Activated naive CD4-positive, alpha-beta T cell treated with anti-CD3 and anti-CD28 coated beads for 36 hours (primary cell): ENCODE measurements at regions of chr9 and their contacts with region 1.

Region 1: DNA sequence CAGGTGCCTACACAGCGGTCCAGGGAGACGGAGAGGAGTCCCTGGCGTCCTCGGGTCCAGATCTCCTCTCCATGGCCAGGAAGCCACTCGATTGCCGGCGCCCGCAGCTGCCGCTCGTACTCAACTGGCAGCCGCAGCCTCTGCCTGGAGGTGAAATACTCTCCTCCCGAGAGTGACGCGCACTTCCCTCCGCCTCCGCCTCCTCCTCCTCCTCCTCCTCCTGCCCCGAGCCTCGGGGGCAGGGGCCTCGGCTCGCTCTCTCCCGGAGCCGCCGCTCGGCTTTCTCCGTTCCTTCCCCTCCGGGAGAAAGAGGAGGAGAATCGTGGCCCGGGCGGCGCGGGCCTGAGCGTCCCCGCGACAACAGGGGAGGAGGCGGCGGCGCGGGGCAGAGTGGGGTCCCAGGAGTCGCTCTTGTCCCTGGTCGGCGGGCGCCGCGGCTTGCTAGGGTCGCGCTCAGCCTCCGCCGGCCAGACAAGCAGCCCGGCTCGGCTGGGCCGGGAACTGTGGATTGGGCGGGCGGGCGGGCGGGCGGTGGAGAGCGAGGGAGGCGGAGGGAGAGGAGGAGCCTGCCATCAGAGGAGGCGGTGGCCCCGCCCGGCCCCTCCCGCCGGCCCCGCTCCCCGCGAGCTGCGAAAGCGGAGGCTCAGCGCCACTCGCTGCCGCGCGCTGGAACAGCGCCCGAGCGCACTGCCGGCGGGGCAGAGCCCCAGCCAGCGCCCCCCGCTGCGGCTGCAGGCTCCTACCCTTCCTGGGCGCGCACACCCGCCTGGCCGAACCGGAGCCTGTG is at the start of gene CEMIP2:
- DNase-seq: peak; percentile 88
- H3K4me3 Mint-ChIP-seq: peak within 1 kb of the TSS; percentile 86
- H3K27ac Mint-ChIP-seq: peak within 1 kb of the TSS; percentile 91
- H3K4me1 Mint-ChIP-seq: peaks cover 37% of the 10 kb centered on the region
- H3K27me3 Mint-ChIP-seq: no peaks in the 10 kb centered on the region
- total RNA-seq, gene CEMIP2: 36.4 to 39.7 TPM

Region 2: GRCh38 chr9:70563431-70564204 is 1205.0 kb before region 1 on chr9:
- CTCF ChIA-PET with region 1: no interaction called
- intact Hi-C with region 1: loop called (anchors 5 kb)
- DNase-seq: peak; percentile 82
- H3K4me3 Mint-ChIP-seq: peak overlapping the region; percentile 38
- H3K27ac Mint-ChIP-seq: peak overlapping the region; percentile 97
- H3K4me1 Mint-ChIP-seq: peaks cover 52% of the 10 kb centered on the region
- H3K27me3 Mint-ChIP-seq: no peaks in the 10 kb centered on the region

Region 3: DNA sequence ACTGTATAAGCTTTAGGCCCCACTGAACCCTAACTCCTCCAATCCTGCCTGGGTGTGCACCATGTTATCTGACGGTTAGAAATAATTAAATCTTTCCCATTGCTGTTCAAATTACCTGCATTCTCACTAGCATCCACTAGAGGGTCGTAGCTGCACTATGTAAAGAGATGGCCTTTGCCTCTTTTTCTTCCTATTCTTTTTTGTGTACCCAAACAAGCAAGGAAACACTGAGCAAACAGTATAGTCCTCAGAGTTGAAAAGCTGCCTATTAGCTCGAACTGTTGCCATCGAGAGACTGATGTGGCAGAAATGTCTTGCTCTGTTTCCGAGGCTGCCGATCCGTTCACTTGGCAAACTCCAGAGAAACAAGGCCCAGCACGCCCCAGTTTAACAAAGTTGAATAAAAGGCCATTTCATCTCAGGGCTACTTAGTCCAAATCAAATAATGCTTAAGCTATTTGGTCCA is 483.4 kb before region 1 on chr9:
- CTCF ChIA-PET with region 1: interaction called, 3 read pairs
- intact Hi-C with region 1: loop called (anchors 1 kb)
- DNase-seq: peak; percentile 58
- H3K4me3 Mint-ChIP-seq: no peak overlapping the region
- H3K27ac Mint-ChIP-seq: no peak overlapping the region
- H3K4me1 Mint-ChIP-seq: no peaks in the 10 kb centered on the region
- H3K27me3 Mint-ChIP-seq: peaks cover 7% of the 10 kb centered on the region

Region 4: GRCh38 chr9:71628247-71628646 is 140.3 kb before region 1 on chr9:
- CTCF ChIA-PET with region 1: interaction called, 13 read pairs
- intact Hi-C with region 1: loop called (anchors 1 kb)
- DNase-seq: no peak
- H3K4me3 Mint-ChIP-seq: no peak overlapping the region
- H3K27ac Mint-ChIP-seq: no peak overlapping the region
- H3K4me1 Mint-ChIP-seq: no peaks in the 10 kb centered on the region
- H3K27me3 Mint-ChIP-seq: no peaks in the 10 kb centered on the region

Region 5: DNA sequence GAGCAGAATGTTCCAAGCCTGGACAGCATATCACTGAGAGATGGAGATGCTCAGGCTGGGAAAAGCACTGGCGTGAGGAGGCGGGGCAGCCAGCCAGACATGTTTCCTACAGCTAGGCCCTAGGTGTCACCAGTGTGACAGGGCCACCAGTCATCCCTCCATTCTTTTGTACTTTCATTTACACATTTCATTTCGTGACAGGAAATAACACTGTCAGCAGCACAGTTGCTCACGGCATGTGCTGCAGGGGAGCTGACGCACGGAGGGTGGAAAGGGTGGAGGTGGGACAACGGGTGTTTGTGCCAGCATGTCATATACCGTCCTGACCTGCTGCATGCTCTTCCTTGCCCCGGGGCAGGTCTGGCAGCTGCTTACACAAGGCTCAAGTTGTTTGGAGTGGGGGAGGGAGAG is 14.5 kb after region 1 on chr9:
- CTCF ChIA-PET with region 1: interaction called, 48 read pairs
- intact Hi-C with region 1: loop called (anchors 1 kb)
- DNase-seq: peak; percentile 95
- H3K4me3 Mint-ChIP-seq: peak overlapping the region; percentile 67
- H3K27ac Mint-ChIP-seq: peak overlapping the region; percentile 92
- H3K4me1 Mint-ChIP-seq: peaks cover 47% of the 10 kb centered on the region
- H3K27me3 Mint-ChIP-seq: no peaks in the 10 kb centered on the region

Region 6: GRCh38 chr9:71911253-71912074 is 142.9 kb after region 1 on chr9 and contains the start of gene C9orf85:
- CTCF ChIA-PET with region 1: no interaction called
- intact Hi-C with region 1: loop called (anchors 1 kb)
- DNase-seq: peak; percentile 97
- H3K4me3 Mint-ChIP-seq: peak within 1 kb of the TSS; percentile 99
- H3K27ac Mint-ChIP-seq: peak within 1 kb of the TSS; percentile 92
- H3K4me1 Mint-ChIP-seq: peaks cover 55% of the 10 kb centered on the region
- H3K27me3 Mint-ChIP-seq: no peaks in the 10 kb centered on the region
- total RNA-seq, gene C9orf85: 6.2 to 6.7 TPM

Region 7: DNA sequence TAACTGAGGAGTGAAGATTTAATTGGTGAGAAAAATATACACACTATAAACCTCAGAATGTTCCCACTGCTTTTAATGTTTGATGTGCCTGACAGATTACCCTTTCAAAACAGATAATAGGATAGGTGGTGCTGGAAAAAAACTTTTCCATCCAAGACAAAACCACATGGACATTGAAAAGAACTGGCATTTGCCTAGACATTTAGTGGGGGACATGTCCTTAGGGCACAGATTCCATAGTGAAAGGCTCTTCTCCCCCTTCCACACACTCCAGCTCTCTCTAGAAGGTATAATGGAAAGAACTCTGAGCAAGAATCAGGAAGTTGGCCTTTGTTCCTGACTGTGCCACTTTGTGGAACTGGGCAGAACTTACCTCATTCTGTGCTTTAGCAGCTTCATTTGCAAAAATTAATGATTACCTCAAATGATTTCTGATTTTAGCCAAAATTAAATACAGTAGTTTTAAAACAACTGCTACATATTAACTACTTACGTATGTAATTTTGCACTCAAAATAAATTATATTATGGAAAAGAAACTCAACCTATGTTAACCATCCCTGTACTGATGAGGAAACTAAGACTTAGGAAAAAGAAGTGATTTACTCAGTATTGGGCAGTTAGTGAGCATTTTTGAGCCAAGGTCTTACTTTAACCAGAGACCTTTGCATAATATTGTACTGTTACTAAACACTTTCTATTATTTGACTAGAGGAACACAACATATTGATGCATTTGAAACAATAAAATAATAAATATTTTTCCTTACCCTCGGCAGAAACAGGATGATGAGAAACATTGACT is 796.1 kb after region 1 on chr9:
- CTCF ChIA-PET with region 1: no interaction called
- intact Hi-C with region 1: no loop called
- DNase-seq: no peak
- H3K4me3 Mint-ChIP-seq: no peak overlapping the region
- H3K27ac Mint-ChIP-seq: no peak overlapping the region
- H3K4me1 Mint-ChIP-seq: no peaks in the 10 kb centered on the region
- H3K27me3 Mint-ChIP-seq: peaks cover 2% of the 10 kb centered on the region

Region 8: GRCh38 chr9:73149371-73150067 is 1380.9 kb after region 1 on chr9:
- CTCF ChIA-PET with region 1: no interaction called
- intact Hi-C with region 1: loop called (anchors 10 kb)
- DNase-seq: peak; percentile 23
- H3K4me3 Mint-ChIP-seq: peak overlapping the region; percentile 28
- H3K27ac Mint-ChIP-seq: peak overlapping the region; percentile 79
- H3K4me1 Mint-ChIP-seq: peaks cover 55% of the 10 kb centered on the region
- H3K27me3 Mint-ChIP-seq: no peaks in the 10 kb centered on the region